ENCODE measurements at regions of chr9 and their contacts with region 1.

Region 1: DNA sequence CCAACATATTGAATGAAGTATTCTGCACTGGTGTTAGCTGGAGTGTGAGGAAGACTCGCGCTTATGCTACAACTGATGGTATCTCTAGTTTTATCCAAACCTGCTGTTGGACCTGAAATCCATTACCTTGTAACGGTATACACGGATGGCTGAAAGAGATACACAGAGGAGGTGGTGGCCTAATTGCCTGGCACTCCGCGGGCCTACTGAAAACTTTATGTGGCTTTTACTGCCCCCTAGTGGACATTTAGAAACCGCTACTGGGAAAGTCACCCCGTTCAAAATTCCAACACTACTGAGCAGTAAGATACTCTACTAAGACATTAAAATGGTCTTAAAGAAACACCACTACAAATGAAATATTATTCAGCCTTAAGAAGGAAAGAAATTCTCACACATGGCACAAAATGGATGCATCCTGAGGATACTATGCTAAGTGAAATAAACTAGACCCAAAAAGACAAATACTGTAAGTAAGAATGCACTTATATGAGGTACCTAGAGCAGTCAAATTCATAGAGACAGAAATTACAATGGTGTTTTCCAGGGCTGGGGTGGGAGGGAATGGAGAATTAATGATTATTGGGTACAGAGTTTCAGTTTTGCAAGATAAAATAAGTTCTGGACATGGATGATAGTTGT is 100.4 kb downstream of the TTLL11 start:
- DNase-seq: peak; percentile 52 to 85 (median 67)
- H3K4me3 ChIP-seq: no peak overlapping the region
- H3K27ac ChIP-seq: no peak overlapping the region
- H3K4me1 ChIP-seq: no peaks in the 10 kb centered on the region
- H3K27me3 ChIP-seq: no peaks in the 10 kb centered on the region
- CTCF ChIP-seq: peak; percentile 74 to 93 (median 83)
- POLR2A ChIP-seq: no peak

Region 2: GRCh38 chr9:121545875-121546423 is 446.7 kb before region 1 on chr9:
- intact Hi-C with region 1: loop called (anchors 5 kb)
- DNase-seq: peak; percentile 95 to 99 (median 97)
- H3K4me3 ChIP-seq: peak overlapping the region in 1 of 4 donors; percentile 24
- H3K27ac ChIP-seq: no peak overlapping the region
- H3K4me1 ChIP-seq: peaks cover 7 to 17% of the 10 kb centered on the region in 2 donors
- H3K27me3 ChIP-seq: no peaks in the 10 kb centered on the region
- CTCF ChIP-seq: peak; percentile 94 to 99 (median 96)
- POLR2A ChIP-seq: no peak

Region 3: DNA sequence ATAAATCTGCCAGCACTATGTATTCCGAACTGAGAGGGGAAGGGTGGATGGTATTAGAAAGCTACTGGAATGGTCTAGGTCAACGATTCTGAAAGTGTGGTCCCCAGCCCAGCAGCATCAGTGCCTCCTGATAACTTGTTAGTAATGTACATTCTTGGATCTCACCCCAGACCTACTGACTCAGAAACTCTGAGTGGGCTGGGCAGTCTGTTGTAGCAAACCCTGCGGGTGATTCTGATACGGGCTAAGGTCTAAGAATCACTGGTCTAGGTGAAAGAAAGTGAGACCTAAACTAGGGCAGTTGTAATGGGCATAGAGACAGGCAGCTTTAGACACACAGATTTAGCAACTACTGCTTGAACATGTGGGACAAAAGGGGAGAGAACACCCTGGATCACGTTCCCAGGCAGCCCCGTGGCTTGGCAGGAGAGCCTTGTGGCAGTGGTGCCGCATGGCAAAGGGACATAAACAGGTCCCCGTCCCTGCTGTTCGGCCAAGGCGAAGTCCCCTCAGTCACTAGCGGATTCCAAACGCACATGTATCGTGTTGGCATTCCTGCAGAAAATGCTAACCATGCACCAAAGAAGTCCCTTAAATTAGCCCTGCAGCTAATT is 115.9 kb before region 1 on chr9:
- intact Hi-C with region 1: loop called in 1 of 2 experiments (anchors 10 kb)
- DNase-seq: peak in 5 of 7 donors; percentile 28 to 65 (median 50)
- H3K4me3 ChIP-seq: no peak overlapping the region
- H3K27ac ChIP-seq: no peak overlapping the region
- H3K4me1 ChIP-seq: no peaks in the 10 kb centered on the region
- H3K27me3 ChIP-seq: no peaks in the 10 kb centered on the region
- CTCF ChIP-seq: no peak
- POLR2A ChIP-seq: no peak